Esophagus muscularis mucosa (tissue), 4 donors: ENCODE measurements at regions of chr2 and their contacts with region 1.

Region 1: GRCh38 chr2:223036790-223037444 is 15.1 kb upstream of the KCNE4 start:
- DNase-seq: no peak
- H3K4me3 ChIP-seq: no peak overlapping the region
- H3K27ac ChIP-seq: no peak overlapping the region
- H3K4me1 ChIP-seq: peaks cover 4 to 9% (median 8%) of the 10 kb centered on the region in 4 donors
- H3K27me3 ChIP-seq: no peaks in the 10 kb centered on the region
- CTCF ChIP-seq: no peak
- EP300 ChIP-seq: no peak
- POLR2A ChIP-seq: no peak

Region 2: GRCh38 chr2:222753251-222753824 is 283.6 kb before region 1 on chr2:
- intact Hi-C with region 1: no loop called
- DNase-seq: no peak
- H3K4me3 ChIP-seq: no peak overlapping the region
- H3K27ac ChIP-seq: peak overlapping the region; percentile 31 to 69 (median 58)
- H3K4me1 ChIP-seq: peaks cover 15 to 34% (median 23%) of the 10 kb centered on the region in 4 donors
- H3K27me3 ChIP-seq: no peaks in the 10 kb centered on the region
- CTCF ChIP-seq: no peak
- EP300 ChIP-seq: no peak
- POLR2A ChIP-seq: no peak

Region 3: DNA sequence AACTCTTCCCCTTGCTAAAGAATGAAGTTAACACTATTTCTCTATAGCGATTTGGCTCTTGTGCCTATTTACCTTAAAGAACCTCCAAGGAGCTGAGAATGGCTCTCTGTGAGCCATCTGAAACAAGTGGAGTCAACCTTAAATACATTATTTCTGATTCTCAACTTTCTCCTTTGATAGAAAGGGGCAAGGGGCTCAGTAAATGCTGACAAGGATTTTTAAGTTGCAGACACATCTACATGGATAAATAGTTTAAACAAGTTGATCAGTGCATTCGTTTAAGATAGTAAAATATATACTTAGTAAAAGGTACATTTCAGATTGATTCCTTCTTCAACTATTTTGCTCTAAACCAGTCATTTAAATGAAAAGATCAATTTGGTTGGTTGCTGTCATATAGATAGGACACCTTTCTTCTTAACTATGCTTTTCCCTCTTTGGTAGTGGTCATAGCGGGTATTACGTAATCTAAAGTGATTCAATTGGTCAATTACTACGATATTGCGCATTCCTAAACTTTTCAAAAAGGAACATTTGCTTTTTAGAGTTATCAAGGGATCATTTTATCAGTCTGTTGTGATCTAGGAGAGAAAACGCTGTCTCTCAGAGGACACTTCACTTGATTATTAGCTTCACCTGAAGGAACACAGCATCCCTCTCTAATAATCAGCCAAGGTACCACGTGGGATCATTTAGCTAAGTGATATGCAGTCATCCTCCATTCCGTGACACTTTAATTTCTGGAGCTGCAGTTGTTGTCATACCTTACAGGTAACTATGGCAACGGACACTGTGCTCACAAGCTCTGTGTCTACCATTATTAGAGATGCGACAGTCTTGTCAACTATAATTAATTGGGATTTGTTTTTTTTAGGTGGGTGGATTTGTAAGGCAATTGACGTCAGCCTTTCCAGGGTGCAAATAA is 35.8 kb before region 1 on chr2:
- intact Hi-C with region 1: loop called (anchors 5 kb)
- DNase-seq: peak; percentile 24
- H3K4me3 ChIP-seq: no peak overlapping the region
- H3K27ac ChIP-seq: no peak overlapping the region
- H3K4me1 ChIP-seq: no peaks in the 10 kb centered on the region
- H3K27me3 ChIP-seq: no peaks in the 10 kb centered on the region
- CTCF ChIP-seq: no peak
- EP300 ChIP-seq: no peak
- POLR2A ChIP-seq: no peak